Caco-2 (cell line): ENCODE measurements at regions of chr15 and their contacts with region 1.

Region 1: DNA sequence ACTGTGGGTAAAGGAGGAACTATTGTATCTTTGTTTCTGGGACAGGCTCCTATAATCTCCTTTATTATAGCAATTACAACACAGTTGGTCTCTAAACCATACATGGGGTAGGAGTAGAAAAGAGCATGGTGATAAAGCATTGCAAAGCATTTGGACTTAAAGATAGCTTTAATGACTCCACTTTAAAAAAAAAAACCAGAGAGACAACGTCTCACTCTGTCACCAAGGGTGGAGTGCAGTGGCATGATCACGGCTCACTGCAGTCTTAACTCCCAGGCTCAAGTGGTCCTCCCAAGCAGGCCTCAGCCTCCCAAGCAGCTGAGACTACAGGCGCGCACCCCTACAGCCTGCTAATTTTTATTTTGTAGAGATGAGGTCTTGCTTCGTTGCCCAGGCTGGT is 68.2 kb downstream of the DENND4A start:
- DNase-seq: peak in 1 of 2 experiments; percentile 8
- H3K4me3 ChIP-seq: no peak overlapping the region
- H3K4me3 Mint-ChIP-seq: peak overlapping the region; percentile 33
- H3K27ac Mint-ChIP-seq: peak overlapping the region; percentile 63
- H3K4me1 ChIP-seq: peaks cover 29% of the 10 kb centered on the region
- H3K4me1 Mint-ChIP-seq: peaks cover 5% of the 10 kb centered on the region
- H3K27me3 ChIP-seq: no peaks in the 10 kb centered on the region
- H3K27me3 Mint-ChIP-seq: no peaks in the 10 kb centered on the region
- CTCF ChIP-seq: no peak

Region 2: DNA sequence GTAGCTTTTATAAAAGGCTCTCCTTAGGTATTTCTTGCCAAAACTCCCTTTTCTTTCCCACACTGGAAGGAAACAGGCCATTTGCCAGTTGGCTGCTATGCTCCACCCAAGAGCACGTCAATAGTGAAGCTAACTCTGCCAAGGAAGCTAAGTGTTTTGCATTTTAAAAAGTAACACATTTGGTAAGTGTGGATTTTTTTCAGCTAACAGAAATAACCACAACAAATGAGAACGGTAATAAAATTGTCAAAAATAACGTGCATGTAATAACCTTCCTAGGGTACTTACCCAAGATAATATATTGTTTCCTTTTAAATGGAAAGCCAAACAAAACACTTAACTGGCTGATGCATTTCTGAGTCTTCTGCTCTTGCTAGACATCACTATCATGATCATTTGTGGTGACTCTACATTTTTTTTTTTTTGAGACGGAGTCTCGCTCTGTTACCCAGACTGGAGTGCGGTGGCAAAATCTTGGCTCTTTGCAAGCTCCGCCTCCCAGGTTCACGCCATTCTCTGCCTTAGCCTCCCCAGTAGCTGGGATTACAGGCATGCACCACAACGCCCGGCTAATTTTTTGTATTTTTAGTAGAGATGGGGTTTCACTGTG is 211.0 kb before region 1 on chr15:
- CTCF ChIA-PET with region 1: no interaction called
- POLR2A ChIA-PET with region 1: no interaction called
- intact Hi-C with region 1: no loop called
- DNase-seq: no peak
- H3K4me3 ChIP-seq: no peak overlapping the region
- H3K4me3 Mint-ChIP-seq: no peak overlapping the region
- H3K27ac Mint-ChIP-seq: no peak overlapping the region
- H3K4me1 ChIP-seq: peaks cover 7% of the 10 kb centered on the region
- H3K4me1 Mint-ChIP-seq: no peaks in the 10 kb centered on the region
- H3K27me3 ChIP-seq: no peaks in the 10 kb centered on the region
- H3K27me3 Mint-ChIP-seq: no peaks in the 10 kb centered on the region
- CTCF ChIP-seq: no peak

Region 3: GRCh38 chr15:65783872-65784271 is 60.0 kb after region 1 on chr15:
- CTCF ChIA-PET with region 1: no interaction called
- POLR2A ChIA-PET with region 1: no interaction called
- intact Hi-C with region 1: loop called (anchors 5 kb)
- DNase-seq: peak in 1 of 2 experiments; percentile 28
- H3K4me3 ChIP-seq: no peak overlapping the region
- H3K4me3 Mint-ChIP-seq: peak overlapping the region; percentile 71
- H3K27ac Mint-ChIP-seq: peak overlapping the region; percentile 88
- H3K4me1 ChIP-seq: peaks cover 32% of the 10 kb centered on the region
- H3K4me1 Mint-ChIP-seq: peaks cover 19% of the 10 kb centered on the region
- H3K27me3 ChIP-seq: no peaks in the 10 kb centered on the region
- H3K27me3 Mint-ChIP-seq: no peaks in the 10 kb centered on the region
- CTCF ChIP-seq: no peak